Psoas muscle (tissue), 8 donors: ENCODE measurements at regions of chr3 and their contacts with region 1.

Region 1: DNA sequence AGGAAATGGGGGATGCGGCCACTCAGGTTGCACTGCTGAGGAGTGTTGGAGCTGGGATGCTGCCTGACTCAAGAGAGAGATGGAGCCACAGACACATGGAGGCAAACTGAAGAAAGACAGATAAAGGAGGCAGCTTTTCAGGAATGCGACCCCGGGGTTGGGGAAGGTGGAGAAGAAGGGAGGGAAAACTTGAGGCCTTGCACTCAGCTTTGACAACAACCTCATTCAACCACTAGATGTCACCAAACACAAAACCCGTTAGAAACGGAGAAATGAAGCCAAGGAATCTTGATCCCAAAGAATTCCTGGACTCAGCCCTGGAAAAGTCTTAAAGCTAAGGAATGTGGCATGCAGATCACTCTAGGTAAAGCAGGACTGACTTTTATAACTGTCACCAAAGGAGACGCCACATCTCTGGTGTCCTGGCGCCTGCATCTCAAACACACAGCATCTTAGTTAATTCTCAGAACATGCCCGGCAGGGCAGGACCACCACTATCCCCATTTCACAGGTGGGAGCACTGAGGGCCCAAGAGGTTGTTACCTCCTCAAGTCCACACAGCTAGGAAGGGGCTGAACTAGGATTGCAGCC is 59.6 kb upstream of the LMCD1 start:
- DNase-seq: no peak
- ATAC-seq: peak; percentile 53 to 81 (median 64)
- H3K4me3 ChIP-seq: no peak overlapping the region
- H3K27ac ChIP-seq: no peak overlapping the region
- H3K4me1 ChIP-seq: peaks cover 28% of the 10 kb centered on the region
- H3K27me3 ChIP-seq: no peaks in the 10 kb centered on the region
- CTCF ChIP-seq: peak; percentile 82

Region 2: DNA sequence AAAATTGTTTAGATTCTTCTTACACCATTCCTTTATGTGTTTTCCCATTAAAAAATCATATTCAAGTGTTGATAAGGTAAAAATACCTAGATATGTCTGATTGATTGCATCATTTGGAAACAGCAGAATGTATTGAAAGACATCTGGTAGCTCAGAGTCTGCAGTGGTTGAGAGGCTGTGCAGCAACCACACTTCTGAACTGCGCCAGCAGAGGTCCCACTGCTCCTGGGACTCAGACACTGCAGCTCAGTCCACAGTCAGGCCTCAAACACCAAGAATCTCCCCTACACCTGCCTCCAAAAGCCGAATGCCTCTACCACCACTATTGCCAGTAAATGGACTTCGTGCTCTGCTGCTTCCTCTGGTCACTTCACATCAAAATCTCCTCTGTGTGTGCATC is 117.3 kb before region 1 on chr3:
- intact Hi-C with region 1: no loop called
- DNase-seq: peak; percentile 18 to 36
- ATAC-seq: no peak
- H3K4me3 ChIP-seq: no peak overlapping the region
- H3K27ac ChIP-seq: no peak overlapping the region
- H3K4me1 ChIP-seq: no peaks in the 10 kb centered on the region
- H3K27me3 ChIP-seq: peaks cover 0 to 2% (median 0%) of the 10 kb centered on the region in 3 donors
- CTCF ChIP-seq: no peak

Region 3: DNA sequence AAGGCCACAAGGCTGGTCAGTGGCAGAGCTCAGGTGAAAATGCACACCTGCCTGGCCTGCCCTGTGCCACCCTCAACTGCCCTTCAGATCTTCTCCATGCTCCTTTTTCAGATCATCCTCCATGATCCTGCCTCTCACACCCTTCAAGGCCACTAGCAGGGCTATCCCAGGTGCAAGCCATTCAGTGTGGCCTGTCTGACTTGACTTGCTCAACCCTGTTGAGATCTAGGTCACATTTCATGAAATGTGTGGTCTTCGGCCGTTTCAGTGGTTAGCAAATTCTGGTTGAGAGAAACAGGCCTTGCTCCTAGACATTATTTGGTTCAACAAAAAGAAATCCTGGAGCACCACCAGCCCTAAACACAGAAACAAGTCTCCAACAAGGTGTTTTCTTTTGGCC is 32.9 kb after region 1 on chr3:
- intact Hi-C with region 1: loop called (anchors 2 to 5 kb)
- DNase-seq: no peak
- ATAC-seq: no peak
- H3K4me3 ChIP-seq: no peak overlapping the region
- H3K27ac ChIP-seq: no peak overlapping the region
- H3K4me1 ChIP-seq: no peaks in the 10 kb centered on the region
- H3K27me3 ChIP-seq: no peaks in the 10 kb centered on the region
- CTCF ChIP-seq: no peak

Region 4: DNA sequence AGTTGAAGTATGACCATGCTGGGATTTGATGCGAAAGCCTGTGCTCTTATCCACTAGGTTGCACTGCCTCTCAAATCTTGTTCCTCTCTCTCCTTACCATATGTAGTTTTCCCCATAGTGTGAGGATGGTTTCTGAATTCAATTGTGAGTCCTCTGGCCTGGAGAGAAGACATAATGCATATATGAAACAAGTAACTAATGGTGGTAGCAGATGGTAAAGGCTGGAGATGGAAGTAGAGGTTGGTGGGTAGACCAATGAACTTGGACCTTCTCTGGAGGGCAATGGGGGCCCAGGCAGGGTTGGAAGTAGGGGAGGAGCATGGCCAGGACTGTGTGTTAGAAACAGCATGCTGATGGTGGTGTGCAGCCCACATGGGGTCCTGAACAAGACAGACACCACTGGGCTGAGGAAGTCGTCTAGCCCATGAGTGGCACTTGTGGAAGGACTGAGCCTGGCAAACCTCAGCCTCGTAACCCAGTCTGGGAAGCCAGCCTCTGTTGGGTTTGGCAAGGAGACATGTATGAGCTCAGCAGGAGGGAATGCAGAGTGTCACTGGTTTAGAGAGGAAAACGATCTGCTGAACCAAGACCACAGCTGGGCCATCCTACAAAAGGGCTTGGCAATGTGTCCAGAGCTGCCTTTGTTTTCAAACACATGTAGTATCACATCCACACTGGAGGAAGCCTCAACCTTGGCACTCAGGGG is 41.0 kb after region 1 on chr3:
- intact Hi-C with region 1: loop called (anchors 2 to 5 kb)
- DNase-seq: peak; percentile 73 to 82
- ATAC-seq: peak; percentile 95 to 98 (median 98)
- H3K4me3 ChIP-seq: no peak overlapping the region
- H3K27ac ChIP-seq: peak overlapping the region; percentile 65
- H3K4me1 ChIP-seq: peaks cover 36% of the 10 kb centered on the region
- H3K27me3 ChIP-seq: no peaks in the 10 kb centered on the region
- CTCF ChIP-seq: no peak

Region 5: GRCh38 chr3:8509961-8510360 is 67.9 kb after region 1 on chr3:
- intact Hi-C with region 1: loop called in 1 of 2 experiments (anchors 5 kb)
- DNase-seq: peak; percentile 46 to 78
- ATAC-seq: peak; percentile 91 to 96 (median 92)
- H3K4me3 ChIP-seq: no peak overlapping the region
- H3K27ac ChIP-seq: peak overlapping the region; percentile 85
- H3K4me1 ChIP-seq: peaks cover 90% of the 10 kb centered on the region
- H3K27me3 ChIP-seq: no peaks in the 10 kb centered on the region
- CTCF ChIP-seq: no peak

Region 6: DNA sequence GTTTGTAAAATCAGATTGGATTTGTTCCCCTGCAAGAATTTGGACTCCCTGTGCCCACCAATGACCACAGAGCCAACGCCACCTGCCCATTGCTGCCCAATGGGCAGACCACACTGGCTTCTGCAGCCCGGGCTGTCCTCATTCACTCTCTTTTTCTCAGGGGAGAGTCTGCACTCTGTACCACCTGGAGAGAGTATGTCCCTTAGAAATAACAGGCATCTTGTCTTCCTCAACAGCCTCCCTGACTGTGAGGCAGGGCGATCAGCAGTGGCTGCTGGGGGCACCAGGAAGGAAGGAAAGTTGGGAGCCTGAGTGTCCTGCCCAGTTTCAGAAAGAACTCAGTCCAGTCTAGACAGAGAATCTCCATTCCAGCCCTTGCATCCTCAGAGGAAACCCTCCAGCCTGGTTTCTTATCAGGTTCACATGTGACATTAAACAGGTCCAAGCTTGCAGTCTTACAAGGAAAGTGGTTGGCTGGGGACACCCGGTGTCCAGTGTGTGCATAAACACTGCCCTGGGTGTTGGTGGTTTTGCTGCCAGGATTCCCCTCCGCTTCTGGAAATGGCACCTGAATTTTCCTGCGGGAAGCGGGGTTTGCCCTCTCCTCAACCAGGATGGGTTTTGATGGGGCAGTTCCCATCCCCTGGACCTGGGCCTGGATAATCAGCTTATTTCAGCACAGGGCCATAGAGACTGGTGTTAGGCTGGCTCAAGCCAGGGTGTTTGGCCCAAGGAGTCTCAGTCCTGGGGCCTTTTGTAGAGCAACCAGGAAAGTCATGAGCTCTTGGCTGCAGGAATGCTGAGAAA is 165.4 kb after region 1 on chr3:
- intact Hi-C with region 1: loop called (anchors 2 kb)
- DNase-seq: peak; percentile 61 to 81
- ATAC-seq: peak; percentile 93 to 99 (median 96)
- H3K4me3 ChIP-seq: no peak overlapping the region
- H3K27ac ChIP-seq: no peak overlapping the region
- H3K4me1 ChIP-seq: peaks cover 10% of the 10 kb centered on the region
- H3K27me3 ChIP-seq: no peaks in the 10 kb centered on the region
- CTCF ChIP-seq: peak; percentile 80

Region 7: GRCh38 chr3:8622873-8623691 is 181.0 kb after region 1 on chr3:
- intact Hi-C with region 1: loop called (anchors 1 to 5 kb)
- DNase-seq: peak; percentile 72 to 86
- ATAC-seq: peak; percentile 83 to 93 (median 86)
- H3K4me3 ChIP-seq: no peak overlapping the region
- H3K27ac ChIP-seq: no peak overlapping the region
- H3K4me1 ChIP-seq: peaks cover 7% of the 10 kb centered on the region
- H3K27me3 ChIP-seq: no peaks in the 10 kb centered on the region
- CTCF ChIP-seq: peak; percentile 93